ENCODE measurements at regions of chr19 and their contacts with region 1.

Region 1: DNA sequence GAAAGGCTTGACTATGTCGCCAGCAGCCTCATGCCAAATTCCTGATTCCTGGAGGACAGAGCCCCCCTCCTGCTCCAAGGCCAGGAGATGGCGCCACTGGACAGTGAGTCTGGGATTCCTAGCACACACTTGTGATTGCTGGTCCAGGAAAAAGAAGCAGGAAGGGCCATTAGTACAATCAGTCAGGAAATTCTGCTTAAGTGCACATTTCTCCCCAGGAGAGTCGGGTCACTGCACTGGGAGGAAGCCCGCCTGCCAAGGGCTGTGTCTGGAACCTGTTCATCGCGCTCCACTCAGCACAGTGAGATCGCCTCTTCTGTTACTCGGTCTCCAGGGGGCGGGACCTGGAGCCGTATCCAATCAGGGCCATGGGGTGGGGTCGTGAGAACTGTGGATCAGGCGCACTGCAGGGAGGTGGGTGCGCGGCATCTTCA is 65.1 kb downstream of the ZNF823 start:
- DNase-seq: no peak
- H3K4me3 ChIP-seq: peak overlapping the region; percentile 48 to 66 (median 57)
- H3K27ac ChIP-seq: peak overlapping the region in 3 of 4 donors; percentile 31 to 50 (median 34)
- H3K4me1 ChIP-seq: peaks cover 0 to 15% (median 14%) of the 10 kb centered on the region in 4 donors
- H3K27me3 ChIP-seq: peaks cover 0 to 8% (median 0%) of the 10 kb centered on the region in 4 donors
- CTCF ChIP-seq: peak; percentile 80 to 85 (median 83)
- EP300 ChIP-seq: no peak
- POLR2A ChIP-seq: no peak

Region 2: GRCh38 chr19:11787536-11787935 is 113.9 kb after region 1 on chr19:
- intact Hi-C with region 1: loop called (anchors 5 kb)
- DNase-seq: no peak
- H3K4me3 ChIP-seq: no peak overlapping the region
- H3K27ac ChIP-seq: no peak overlapping the region
- H3K4me1 ChIP-seq: no peaks in the 10 kb centered on the region
- H3K27me3 ChIP-seq: no peaks in the 10 kb centered on the region
- CTCF ChIP-seq: no peak
- EP300 ChIP-seq: no peak
- POLR2A ChIP-seq: no peak